Esophagus muscularis mucosa (tissue), 4 donors: ENCODE measurements at regions of chr11 and their contacts with region 1.

Region 1: DNA sequence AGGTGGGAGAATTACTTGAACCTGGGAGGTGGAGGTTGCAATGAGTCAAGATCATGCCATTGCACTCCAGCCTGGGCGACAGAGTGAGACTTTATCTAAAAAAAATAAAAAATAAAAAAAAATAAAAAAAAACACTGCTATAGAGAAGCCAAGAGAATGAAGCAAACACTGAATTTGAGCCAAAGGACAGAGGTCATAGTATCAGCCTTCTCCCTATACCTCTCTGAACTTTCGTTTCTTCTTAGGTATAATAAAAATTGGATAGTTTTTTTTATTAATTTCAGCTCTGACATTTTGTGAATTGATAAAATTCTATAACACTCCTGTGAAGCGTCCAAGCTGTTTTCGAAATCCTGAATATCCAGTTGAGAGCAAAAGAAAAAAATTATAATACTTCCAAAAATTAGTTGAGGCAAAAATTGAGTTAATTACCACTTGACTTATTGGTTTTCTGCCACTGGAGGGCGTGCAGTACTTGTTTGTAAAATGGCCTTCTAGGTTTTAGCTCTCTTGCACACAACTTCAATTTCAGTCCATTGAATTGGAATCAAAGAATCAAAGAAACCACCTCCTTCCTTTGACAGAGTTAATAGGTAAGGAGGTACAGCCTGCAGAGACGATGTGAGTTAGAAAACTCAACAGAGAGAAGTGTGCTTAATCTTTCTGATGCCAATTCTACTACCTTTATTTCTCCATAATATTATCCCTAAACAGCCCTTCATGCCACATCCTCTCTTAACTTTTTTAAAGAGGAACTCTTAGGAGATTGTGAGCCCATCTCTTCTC is 143.2 kb downstream of the BBOX1 start:
- DNase-seq: no peak
- H3K4me3 ChIP-seq: no peak overlapping the region
- H3K27ac ChIP-seq: no peak overlapping the region
- H3K4me1 ChIP-seq: peaks cover 0 to 8% (median 6%) of the 10 kb centered on the region in 4 donors
- H3K27me3 ChIP-seq: no peaks in the 10 kb centered on the region
- CTCF ChIP-seq: peak; percentile 71 to 75 (median 73)
- EP300 ChIP-seq: no peak
- POLR2A ChIP-seq: no peak

Region 2: DNA sequence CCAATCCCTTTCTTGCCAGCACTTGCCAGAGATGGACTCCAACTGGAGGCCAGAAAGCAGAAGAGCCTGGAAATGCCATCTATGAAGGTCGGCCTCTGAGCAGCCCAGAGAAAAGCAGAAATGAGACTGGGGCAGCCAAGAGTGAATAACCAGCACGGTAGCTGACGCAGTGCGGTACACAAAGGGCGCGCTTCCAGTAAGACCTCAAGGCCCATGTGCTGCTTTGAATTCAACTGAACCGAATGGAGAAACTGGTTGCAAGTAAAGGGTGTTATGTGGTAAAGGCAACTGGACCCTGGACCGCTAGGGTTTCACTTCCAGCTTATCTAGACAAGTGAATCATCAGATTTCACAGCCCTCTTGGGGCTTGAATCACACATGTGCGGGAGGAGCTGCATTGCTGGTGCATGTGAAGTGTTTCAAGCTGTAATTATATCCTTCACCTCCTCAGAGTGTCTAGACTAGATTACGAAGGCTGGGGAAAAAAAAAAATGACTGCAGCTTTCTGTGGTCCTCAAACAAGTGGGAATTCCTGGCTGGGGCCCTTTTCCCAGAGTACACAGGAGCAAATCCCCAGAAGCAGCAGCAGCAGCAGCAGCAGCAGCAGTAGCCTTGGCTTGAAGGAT is 50.3 kb after region 1 on chr11:
- intact Hi-C with region 1: no loop called
- DNase-seq: no peak
- H3K4me3 ChIP-seq: no peak overlapping the region
- H3K27ac ChIP-seq: no peak overlapping the region
- H3K4me1 ChIP-seq: peaks cover 0 to 11% (median 10%) of the 10 kb centered on the region in 4 donors
- H3K27me3 ChIP-seq: no peaks in the 10 kb centered on the region
- CTCF ChIP-seq: no peak
- EP300 ChIP-seq: no peak
- POLR2A ChIP-seq: no peak

Region 3: GRCh38 chr11:27254729-27255446 is 71.0 kb after region 1 on chr11:
- intact Hi-C with region 1: no loop called
- DNase-seq: no peak
- H3K4me3 ChIP-seq: no peak overlapping the region
- H3K27ac ChIP-seq: no peak overlapping the region
- H3K4me1 ChIP-seq: peaks cover 0 to 4% (median 0%) of the 10 kb centered on the region in 4 donors
- H3K27me3 ChIP-seq: no peaks in the 10 kb centered on the region
- CTCF ChIP-seq: no peak
- EP300 ChIP-seq: no peak
- POLR2A ChIP-seq: no peak

Region 4: DNA sequence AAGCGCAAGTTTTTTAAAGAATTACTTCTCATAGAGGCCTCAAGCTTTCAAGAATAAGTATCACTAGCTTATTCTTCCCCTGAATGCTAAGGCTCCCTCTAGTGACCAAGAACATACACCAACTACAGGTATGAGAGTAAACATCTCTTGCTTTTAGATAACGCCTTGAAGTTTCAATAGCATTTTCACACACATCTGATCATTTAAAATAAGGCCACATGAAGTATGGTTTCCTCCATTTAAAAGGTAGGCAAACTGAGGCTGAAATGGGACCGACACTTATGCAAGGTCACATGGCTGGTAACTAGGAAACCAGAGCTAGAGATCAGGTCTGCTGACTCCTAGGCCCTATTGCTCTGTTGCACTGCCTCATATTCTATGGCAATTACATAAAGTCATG is 112.6 kb after region 1 on chr11:
- intact Hi-C with region 1: loop called (anchors 5 kb)
- DNase-seq: no peak
- H3K4me3 ChIP-seq: no peak overlapping the region
- H3K27ac ChIP-seq: no peak overlapping the region
- H3K4me1 ChIP-seq: no peaks in the 10 kb centered on the region
- H3K27me3 ChIP-seq: no peaks in the 10 kb centered on the region
- CTCF ChIP-seq: peak; percentile 35 to 60 (median 50)
- EP300 ChIP-seq: no peak
- POLR2A ChIP-seq: no peak

Region 5: GRCh38 chr11:27362749-27363575 is 179.1 kb after region 1 on chr11 and contains the start of gene CCDC34:
- intact Hi-C with region 1: loop called (anchors 10 kb)
- DNase-seq: peak; percentile 95
- H3K4me3 ChIP-seq: peak within 1 kb of the TSS; percentile 68 to 74 (median 72)
- H3K27ac ChIP-seq: peak within 1 kb of the TSS in 3 of 4 donors; percentile 30 to 42 (median 42)
- H3K4me1 ChIP-seq: peaks cover 6 to 18% (median 15%) of the 10 kb centered on the region in 4 donors
- H3K27me3 ChIP-seq: no peaks in the 10 kb centered on the region
- CTCF ChIP-seq: no peak
- EP300 ChIP-seq: no peak
- POLR2A ChIP-seq: no peak
- total RNA-seq, gene CCDC34: 0.83 to 1.5 (median 1.2) TPM

Region 6: GRCh38 chr11:27485930-27486773 is 302.3 kb after region 1 on chr11:
- intact Hi-C with region 1: loop called (anchors 2 kb)
- DNase-seq: no peak
- H3K4me3 ChIP-seq: no peak overlapping the region
- H3K27ac ChIP-seq: no peak overlapping the region
- H3K4me1 ChIP-seq: no peaks in the 10 kb centered on the region
- H3K27me3 ChIP-seq: no peaks in the 10 kb centered on the region
- CTCF ChIP-seq: peak; percentile 80 to 94 (median 86)
- EP300 ChIP-seq: no peak
- POLR2A ChIP-seq: no peak